ENCODE measurements at regions of chr18 and their contacts with region 1.

Region 1: GRCh38 chr18:59988098-59988706 is 88.4 kb downstream of the PMAIP1 start:
- DNase-seq: no peak
- H3K4me3 ChIP-seq: no peak overlapping the region
- H3K27ac ChIP-seq: no peak overlapping the region
- H3K4me1 ChIP-seq: peaks cover 9% of the 10 kb centered on the region
- H3K27me3 ChIP-seq: peaks cover 3% of the 10 kb centered on the region
- CTCF ChIP-seq: peak; percentile 87 to 93

Region 2: DNA sequence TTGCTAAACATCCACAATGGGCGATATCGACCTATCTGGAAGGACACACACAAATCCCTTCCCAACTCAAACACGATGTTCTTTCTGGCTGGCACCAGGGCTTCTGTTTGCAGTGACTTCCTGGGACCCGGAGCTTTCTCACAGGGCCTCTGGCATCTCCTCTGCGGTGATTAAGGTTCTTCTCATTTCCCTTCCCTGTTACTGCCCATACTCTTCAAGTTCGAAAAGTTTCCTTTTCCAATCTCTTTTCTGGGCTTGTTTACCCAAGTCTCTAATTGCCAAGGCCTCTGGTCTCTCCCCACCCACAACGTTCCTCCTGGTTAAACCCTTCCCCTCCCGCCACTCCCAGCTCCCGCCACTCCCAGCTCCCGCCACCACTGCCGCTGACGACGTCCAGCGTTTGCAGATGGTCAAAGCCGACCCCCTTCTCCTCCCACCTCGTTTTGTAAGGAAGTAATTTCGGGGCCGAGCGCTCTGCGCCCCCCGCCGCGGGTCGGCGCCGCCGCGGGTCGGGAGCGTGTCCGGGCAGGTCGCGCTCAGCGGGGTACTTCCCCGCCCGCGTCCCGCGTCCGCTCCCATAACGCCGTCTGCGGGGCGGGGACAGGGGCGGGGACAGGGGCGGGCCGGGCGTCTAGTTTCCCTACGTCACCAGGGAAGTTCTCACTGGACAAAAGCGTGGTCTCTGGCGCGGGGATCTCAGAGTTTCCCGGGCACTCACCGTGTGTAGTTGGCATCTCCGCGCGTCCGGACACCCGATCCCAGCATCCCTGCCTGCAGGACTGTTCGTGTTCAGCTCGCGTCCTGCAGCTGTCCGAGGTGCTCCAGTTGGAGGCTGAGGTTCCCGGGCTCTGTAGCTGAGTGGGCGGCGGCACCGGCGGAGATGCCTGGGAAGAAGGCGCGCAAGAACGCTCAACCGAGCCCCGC is 88.6 kb before region 1 on chr18 and contains the start of gene PMAIP1:
- CTCF ChIA-PET with region 1: no interaction called
- dilution Hi-C with region 1: no loop called
- in situ Hi-C with region 1: no loop called
- intact Hi-C with region 1: loop called (anchors 2 kb)
- DNase-seq: peak; percentile 95
- H3K4me3 ChIP-seq: peak within 1 kb of the TSS; percentile 79 to 99 (median 83)
- H3K27ac ChIP-seq: peak within 1 kb of the TSS; percentile 98
- H3K4me1 ChIP-seq: peaks cover 24% of the 10 kb centered on the region
- H3K27me3 ChIP-seq: no peaks in the 10 kb centered on the region
- CTCF ChIP-seq: no peak
- total RNA-seq, gene PMAIP1: 17.8 to 34.3 TPM

Region 3: GRCh38 chr18:59918320-59918755 is 69.9 kb before region 1 on chr18:
- CTCF ChIA-PET with region 1: no interaction called
- dilution Hi-C with region 1: no loop called
- in situ Hi-C with region 1: no loop called
- intact Hi-C with region 1: no loop called
- DNase-seq: peak; percentile 74
- H3K4me3 ChIP-seq: no peak overlapping the region
- H3K27ac ChIP-seq: peak overlapping the region; percentile 35
- H3K4me1 ChIP-seq: peaks cover 47% of the 10 kb centered on the region
- H3K27me3 ChIP-seq: no peaks in the 10 kb centered on the region
- CTCF ChIP-seq: no peak

Region 4: DNA sequence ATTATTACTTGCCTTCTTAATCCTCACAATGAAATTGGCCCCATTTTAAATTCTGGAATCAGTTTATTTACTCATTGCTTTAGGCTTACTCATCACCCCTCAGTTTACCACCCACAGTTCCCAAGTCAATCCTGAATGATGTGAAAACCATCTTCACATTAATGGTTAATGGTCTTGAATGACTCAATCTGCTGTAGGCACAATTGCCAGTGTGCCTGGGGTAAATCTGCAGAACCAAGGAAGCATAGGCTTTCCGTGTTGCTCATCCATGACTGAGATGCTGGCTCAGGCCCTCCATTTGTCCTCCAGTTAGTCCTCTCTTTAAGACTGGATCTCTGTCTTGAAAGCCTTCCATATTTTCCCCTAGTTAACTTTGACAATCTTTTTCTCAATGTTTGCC is 76.1 kb after region 1 on chr18:
- CTCF ChIA-PET with region 1: no interaction called
- dilution Hi-C with region 1: no loop called
- in situ Hi-C with region 1: no loop called
- intact Hi-C with region 1: no loop called
- DNase-seq: peak; percentile 62
- H3K4me3 ChIP-seq: no peak overlapping the region
- H3K27ac ChIP-seq: no peak overlapping the region
- H3K4me1 ChIP-seq: peaks cover 24% of the 10 kb centered on the region
- H3K27me3 ChIP-seq: peaks cover 3% of the 10 kb centered on the region
- CTCF ChIP-seq: no peak

Region 5: DNA sequence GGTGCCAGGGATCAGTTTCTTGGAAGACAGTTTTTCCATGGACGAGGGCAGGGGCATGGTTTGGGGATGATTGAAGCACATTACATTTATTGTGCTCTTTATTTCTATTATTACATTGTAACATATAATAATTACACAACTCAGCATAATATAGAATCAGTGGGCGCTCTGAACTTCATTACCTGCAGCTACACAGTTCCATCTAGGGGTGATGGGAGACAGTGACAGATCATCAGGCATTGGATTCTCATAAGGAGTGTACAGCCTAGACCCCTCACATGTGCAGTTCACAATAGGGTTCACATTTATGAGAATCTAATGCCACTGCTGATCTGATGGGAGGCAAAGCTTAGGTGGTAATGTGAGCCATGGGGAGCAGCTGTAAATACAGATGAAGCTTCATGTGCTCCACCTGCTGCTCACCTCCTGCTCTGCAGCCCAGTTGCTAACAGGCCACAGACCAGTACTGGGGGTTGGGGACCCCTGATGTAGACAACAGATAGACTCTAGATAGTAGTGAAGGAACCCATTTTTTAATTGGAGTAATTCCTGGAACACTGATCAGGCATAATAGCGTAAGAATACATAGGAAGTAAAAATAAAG is 425.8 kb after region 1 on chr18:
- CTCF ChIA-PET with region 1: interaction called, 3 read pairs
- dilution Hi-C with region 1: no loop called
- in situ Hi-C with region 1: loop called (anchors 10 kb)
- intact Hi-C with region 1: loop called (anchors 2 kb)
- DNase-seq: peak; percentile 1
- H3K4me3 ChIP-seq: no peak overlapping the region
- H3K27ac ChIP-seq: no peak overlapping the region
- H3K4me1 ChIP-seq: no peaks in the 10 kb centered on the region
- H3K27me3 ChIP-seq: peaks cover 3% of the 10 kb centered on the region
- CTCF ChIP-seq: peak; percentile 29 to 75

Region 6: DNA sequence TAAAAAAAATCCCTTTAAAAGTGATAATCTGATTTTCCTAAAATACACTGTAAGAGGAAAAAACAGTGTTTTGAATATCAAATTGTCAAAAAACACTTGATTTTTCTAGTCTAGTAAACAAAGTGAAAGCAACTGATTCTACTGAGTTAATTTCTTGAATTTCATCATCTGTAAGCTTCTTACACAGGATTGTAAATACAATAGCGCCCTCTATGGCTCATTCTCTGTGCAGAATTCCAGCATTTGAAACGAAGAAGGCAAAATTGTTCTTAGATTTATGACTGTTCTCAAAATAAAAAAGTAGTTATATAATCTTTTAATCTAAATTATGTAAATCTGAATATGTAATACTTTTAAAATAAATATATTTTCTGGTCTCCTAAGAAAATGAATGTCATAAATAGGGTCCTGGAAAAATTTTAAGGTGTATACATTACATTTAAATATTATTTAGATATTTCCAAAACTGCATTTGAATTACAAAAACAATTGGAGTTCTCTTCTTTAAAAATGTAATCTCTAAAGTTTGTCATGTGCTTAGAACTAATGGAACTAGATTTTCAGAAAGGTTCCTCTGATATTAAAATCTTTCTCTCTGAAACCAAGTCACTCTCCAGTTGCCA is 561.2 kb after region 1 on chr18:
- CTCF ChIA-PET with region 1: no interaction called
- dilution Hi-C with region 1: no loop called
- in situ Hi-C with region 1: loop called (anchors 10 kb)
- intact Hi-C with region 1: loop called (anchors 1 kb)
- DNase-seq: peak; percentile 35
- H3K4me3 ChIP-seq: no peak overlapping the region
- H3K27ac ChIP-seq: no peak overlapping the region
- H3K4me1 ChIP-seq: no peaks in the 10 kb centered on the region
- H3K27me3 ChIP-seq: no peaks in the 10 kb centered on the region
- CTCF ChIP-seq: peak; percentile 82 to 87

Region 7: GRCh38 chr18:60554967-60555366 is 566.8 kb after region 1 on chr18:
- CTCF ChIA-PET with region 1: no interaction called
- dilution Hi-C with region 1: no loop called
- in situ Hi-C with region 1: loop called (anchors 10 kb)
- intact Hi-C with region 1: no loop called
- DNase-seq: no peak
- H3K4me3 ChIP-seq: no peak overlapping the region
- H3K27ac ChIP-seq: no peak overlapping the region
- H3K4me1 ChIP-seq: no peaks in the 10 kb centered on the region
- H3K27me3 ChIP-seq: no peaks in the 10 kb centered on the region
- CTCF ChIP-seq: no peak

Region 8: GRCh38 chr18:60668583-60668982 is 680.4 kb after region 1 on chr18:
- CTCF ChIA-PET with region 1: no interaction called
- dilution Hi-C with region 1: no loop called
- in situ Hi-C with region 1: no loop called
- intact Hi-C with region 1: loop called (anchors 10 kb)
- DNase-seq: no peak
- H3K4me3 ChIP-seq: no peak overlapping the region
- H3K27ac ChIP-seq: no peak overlapping the region
- H3K4me1 ChIP-seq: peaks cover 7% of the 10 kb centered on the region
- H3K27me3 ChIP-seq: peaks cover 2% of the 10 kb centered on the region
- CTCF ChIP-seq: peak in 1 of 2 donors; percentile 38